Motor neuron (in vitro differentiated cells): ENCODE measurements at regions of chr4 and their contacts with region 1.

Region 1: GRCh38 chr4:22115262-22115661 is 166.7 kb upstream of the KCNIP4 start:
- ATAC-seq: no peak
- H3K4me3 ChIP-seq: no peak overlapping the region
- H3K27ac ChIP-seq: no peak overlapping the region
- H3K4me1 ChIP-seq: no peaks in the 10 kb centered on the region

Region 2: GRCh38 chr4:22167201-22167600 is 51.9 kb after region 1 on chr4:
- in situ Hi-C with region 1: loop called in 1 of 9 experiments (anchors 10 kb)
- ATAC-seq: no peak
- H3K4me3 ChIP-seq: no peak overlapping the region
- H3K27ac ChIP-seq: no peak overlapping the region
- H3K4me1 ChIP-seq: no peaks in the 10 kb centered on the region